Aorta (tissue), 5 donors: ENCODE measurements at regions of chr15 and their contacts with region 1.

Region 1: GRCh38 chr15:41022487-41023090 is 69.3 kb downstream of the CHAC1 start:
- DNase-seq: peak in 1 of 2 donors; percentile 47
- ATAC-seq: peak; percentile 71
- H3K4me3 ChIP-seq: no peak overlapping the region
- H3K27ac ChIP-seq: peak overlapping the region in 1 of 2 donors; percentile 78
- H3K4me1 ChIP-seq: peaks cover 2 to 5% of the 10 kb centered on the region in 2 donors
- H3K27me3 ChIP-seq: no peaks in the 10 kb centered on the region

Region 2: GRCh38 chr15:40941528-40942336 is 80.9 kb before region 1 on chr15:
- intact Hi-C with region 1: loop called (anchors 2 to 5 kb)
- DNase-seq: peak; percentile 86 to 93
- ATAC-seq: peak; percentile 91
- H3K4me3 ChIP-seq: peak overlapping the region; percentile 40 to 48
- H3K27ac ChIP-seq: peak overlapping the region; percentile 44 to 79
- H3K4me1 ChIP-seq: no peaks in the 10 kb centered on the region
- H3K27me3 ChIP-seq: no peaks in the 10 kb centered on the region

Region 3: DNA sequence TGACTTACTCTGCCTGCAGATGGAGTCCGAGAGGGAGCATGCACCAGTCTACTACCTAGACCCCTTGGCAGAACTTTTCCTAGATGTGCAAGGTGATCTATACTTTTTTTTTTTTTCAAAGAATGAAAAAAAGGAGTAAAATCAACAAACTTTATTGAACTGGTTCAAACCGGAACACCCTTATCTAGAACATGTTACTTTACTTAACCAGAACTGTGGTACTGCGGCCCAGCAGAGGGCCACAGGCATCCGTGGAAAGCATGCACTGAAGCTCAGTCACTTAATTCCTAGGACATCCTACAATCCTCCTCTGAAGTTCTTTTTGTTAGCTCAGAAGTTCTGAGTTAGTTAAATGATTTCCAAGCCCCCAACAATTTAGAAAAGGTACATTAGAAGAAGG is 47.7 kb before region 1 on chr15:
- intact Hi-C with region 1: loop called (anchors 2 to 5 kb)
- DNase-seq: no peak
- ATAC-seq: no peak
- H3K4me3 ChIP-seq: no peak overlapping the region
- H3K27ac ChIP-seq: no peak overlapping the region
- H3K4me1 ChIP-seq: peaks cover 0 to 6% of the 10 kb centered on the region in 2 donors
- H3K27me3 ChIP-seq: no peaks in the 10 kb centered on the region

Region 4: GRCh38 chr15:42375941-42376340 is 1353.4 kb after region 1 on chr15:
- intact Hi-C with region 1: no loop called
- DNase-seq: no peak
- ATAC-seq: no peak
- H3K4me3 ChIP-seq: no peak overlapping the region
- H3K27ac ChIP-seq: no peak overlapping the region
- H3K4me1 ChIP-seq: no peaks in the 10 kb centered on the region
- H3K27me3 ChIP-seq: no peaks in the 10 kb centered on the region